ENCODE measurements at regions of chr18 and their contacts with region 1.

Region 1: DNA sequence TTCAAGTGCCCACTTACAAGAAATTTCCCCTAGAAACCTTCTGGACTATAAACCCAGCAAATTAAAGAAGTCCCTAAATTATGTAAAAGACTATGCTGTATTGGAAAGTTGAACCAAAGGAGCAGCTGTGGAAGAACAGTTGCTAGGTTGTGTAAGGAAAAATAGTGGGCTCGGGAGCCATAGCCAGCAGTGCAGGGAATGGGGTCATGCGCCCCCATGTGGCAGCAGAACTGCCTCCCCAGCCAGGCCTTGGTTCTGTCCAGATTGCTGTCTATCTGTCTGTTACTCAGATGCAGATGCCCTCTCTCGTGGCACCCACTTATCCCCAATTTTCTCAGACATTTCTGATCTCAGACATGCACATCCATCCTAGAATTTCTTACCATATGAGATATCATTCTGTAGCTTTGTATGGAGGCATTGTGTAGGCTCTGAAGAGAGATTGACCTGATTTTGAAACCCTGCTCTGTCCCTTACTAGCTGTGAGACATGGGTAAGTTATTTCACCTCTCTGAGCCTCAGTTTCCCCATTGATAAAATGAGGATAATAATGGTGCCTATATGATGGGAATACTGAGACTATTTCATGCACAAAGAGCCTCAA is 258.3 kb downstream of the SS18 start:
- DNase-seq: peak; percentile 67
- H3K4me3 Mint-ChIP-seq: no peak overlapping the region
- H3K27ac Mint-ChIP-seq: no peak overlapping the region
- H3K4me1 Mint-ChIP-seq: no peaks in the 10 kb centered on the region
- H3K27me3 Mint-ChIP-seq: peaks cover 79% of the 10 kb centered on the region
- CTCF ChIP-seq: peak; percentile 77

Region 2: GRCh38 chr18:24543805-24544498 is 1288.2 kb before region 1 on chr18:
- CTCF ChIA-PET with region 1: interaction called, 4 read pairs
- intact Hi-C with region 1: loop called (anchors 5 kb)
- DNase-seq: peak; percentile 35
- H3K4me3 Mint-ChIP-seq: no peak overlapping the region
- H3K27ac Mint-ChIP-seq: no peak overlapping the region
- H3K4me1 Mint-ChIP-seq: no peaks in the 10 kb centered on the region
- H3K27me3 Mint-ChIP-seq: peaks cover 52% of the 10 kb centered on the region
- CTCF ChIP-seq: peak; percentile 42

Region 3: GRCh38 chr18:25561918-25562317 is 270.2 kb before region 1 on chr18:
- CTCF ChIA-PET with region 1: no interaction called
- intact Hi-C with region 1: loop called (anchors 5 kb)
- DNase-seq: peak; percentile 40
- H3K4me3 Mint-ChIP-seq: no peak overlapping the region
- H3K27ac Mint-ChIP-seq: no peak overlapping the region
- H3K4me1 Mint-ChIP-seq: no peaks in the 10 kb centered on the region
- H3K27me3 Mint-ChIP-seq: peaks cover 18% of the 10 kb centered on the region
- CTCF ChIP-seq: no peak

Region 4: GRCh38 chr18:25805323-25805722 is 26.8 kb before region 1 on chr18:
- CTCF ChIA-PET with region 1: no interaction called
- intact Hi-C with region 1: no loop called
- DNase-seq: no peak
- H3K4me3 Mint-ChIP-seq: no peak overlapping the region
- H3K27ac Mint-ChIP-seq: no peak overlapping the region
- H3K4me1 Mint-ChIP-seq: no peaks in the 10 kb centered on the region
- H3K27me3 Mint-ChIP-seq: peaks cover 34% of the 10 kb centered on the region
- CTCF ChIP-seq: no peak

Region 5: DNA sequence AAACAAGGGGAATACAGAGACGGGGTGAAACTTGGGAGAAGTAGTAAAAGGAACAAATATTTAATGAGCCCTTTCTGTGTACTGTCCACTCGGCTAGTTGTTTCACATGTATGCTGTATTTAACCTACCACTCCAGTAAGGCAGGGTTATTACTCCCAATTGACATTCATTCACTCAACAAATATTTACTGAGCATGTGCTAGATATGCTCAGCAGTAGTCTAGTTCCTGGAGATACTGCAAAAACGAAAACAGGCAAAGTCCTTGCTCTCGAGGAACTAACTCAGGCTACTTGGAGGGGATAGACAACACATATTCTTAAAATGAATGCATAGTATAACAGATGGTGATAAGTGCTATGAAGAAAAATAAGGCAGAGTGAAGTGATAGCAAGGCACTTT is 51.0 kb after region 1 on chr18:
- CTCF ChIA-PET with region 1: no interaction called
- intact Hi-C with region 1: loop called (anchors 10 kb)
- DNase-seq: no peak
- H3K4me3 Mint-ChIP-seq: no peak overlapping the region
- H3K27ac Mint-ChIP-seq: no peak overlapping the region
- H3K4me1 Mint-ChIP-seq: no peaks in the 10 kb centered on the region
- H3K27me3 Mint-ChIP-seq: peaks cover 74% of the 10 kb centered on the region
- CTCF ChIP-seq: no peak

Region 6: DNA sequence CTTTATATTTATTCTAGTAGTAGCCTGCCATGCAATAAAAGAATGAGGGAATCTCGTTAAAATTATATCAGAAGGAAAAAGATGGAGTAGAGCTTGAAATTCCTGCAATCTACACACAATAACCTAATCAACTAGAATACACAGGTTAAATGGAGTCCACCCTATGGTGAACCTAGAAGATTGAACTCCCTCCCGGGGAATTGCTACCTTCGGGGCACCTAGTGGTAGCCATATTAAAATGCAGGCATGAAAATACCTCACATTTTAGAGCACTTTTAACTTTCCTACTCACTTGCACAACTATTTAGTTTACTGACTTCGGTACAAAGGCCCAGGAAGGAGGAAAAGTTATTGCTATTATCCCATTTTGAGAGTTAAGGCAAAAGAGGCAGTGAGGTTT is 83.8 kb after region 1 on chr18:
- CTCF ChIA-PET with region 1: no interaction called
- intact Hi-C with region 1: no loop called
- DNase-seq: no peak
- H3K4me3 Mint-ChIP-seq: no peak overlapping the region
- H3K27ac Mint-ChIP-seq: no peak overlapping the region
- H3K4me1 Mint-ChIP-seq: no peaks in the 10 kb centered on the region
- H3K27me3 Mint-ChIP-seq: peaks cover under 1% of the 10 kb centered on the region
- CTCF ChIP-seq: no peak

Region 7: DNA sequence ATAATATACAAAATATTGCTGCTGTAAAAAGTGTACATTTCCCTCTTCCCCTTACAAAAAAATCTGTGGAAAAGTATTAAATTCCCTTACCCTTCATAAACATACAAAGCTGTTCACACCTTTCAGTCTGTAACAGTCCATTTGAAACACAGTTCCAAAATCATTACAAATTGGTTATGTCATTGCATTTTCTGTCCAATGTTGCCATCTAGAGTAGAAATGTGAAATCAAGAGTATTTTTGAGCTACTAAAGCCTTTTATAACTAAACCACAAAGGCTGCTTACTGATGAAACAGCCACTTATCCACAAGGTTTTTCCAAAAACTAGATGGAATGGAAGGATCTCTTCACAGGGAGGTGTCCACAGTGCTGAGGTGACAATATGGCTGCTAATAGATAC is 185.8 kb after region 1 on chr18:
- CTCF ChIA-PET with region 1: no interaction called
- intact Hi-C with region 1: no loop called
- DNase-seq: no peak
- H3K4me3 Mint-ChIP-seq: no peak overlapping the region
- H3K27ac Mint-ChIP-seq: no peak overlapping the region
- H3K4me1 Mint-ChIP-seq: no peaks in the 10 kb centered on the region
- H3K27me3 Mint-ChIP-seq: no peaks in the 10 kb centered on the region
- CTCF ChIP-seq: no peak

Measured in Calu3 (cell line).